Activated naive CD8-positive, alpha-beta T cell treated with anti-CD3 and anti-CD28 coated beads, Interleukin-2, amount 10 ng/mL, durations not matched to agents 7 days and 5 days (primary cell): ENCODE measurements at regions of chr19 and their contacts with region 1.

Region 1: DNA sequence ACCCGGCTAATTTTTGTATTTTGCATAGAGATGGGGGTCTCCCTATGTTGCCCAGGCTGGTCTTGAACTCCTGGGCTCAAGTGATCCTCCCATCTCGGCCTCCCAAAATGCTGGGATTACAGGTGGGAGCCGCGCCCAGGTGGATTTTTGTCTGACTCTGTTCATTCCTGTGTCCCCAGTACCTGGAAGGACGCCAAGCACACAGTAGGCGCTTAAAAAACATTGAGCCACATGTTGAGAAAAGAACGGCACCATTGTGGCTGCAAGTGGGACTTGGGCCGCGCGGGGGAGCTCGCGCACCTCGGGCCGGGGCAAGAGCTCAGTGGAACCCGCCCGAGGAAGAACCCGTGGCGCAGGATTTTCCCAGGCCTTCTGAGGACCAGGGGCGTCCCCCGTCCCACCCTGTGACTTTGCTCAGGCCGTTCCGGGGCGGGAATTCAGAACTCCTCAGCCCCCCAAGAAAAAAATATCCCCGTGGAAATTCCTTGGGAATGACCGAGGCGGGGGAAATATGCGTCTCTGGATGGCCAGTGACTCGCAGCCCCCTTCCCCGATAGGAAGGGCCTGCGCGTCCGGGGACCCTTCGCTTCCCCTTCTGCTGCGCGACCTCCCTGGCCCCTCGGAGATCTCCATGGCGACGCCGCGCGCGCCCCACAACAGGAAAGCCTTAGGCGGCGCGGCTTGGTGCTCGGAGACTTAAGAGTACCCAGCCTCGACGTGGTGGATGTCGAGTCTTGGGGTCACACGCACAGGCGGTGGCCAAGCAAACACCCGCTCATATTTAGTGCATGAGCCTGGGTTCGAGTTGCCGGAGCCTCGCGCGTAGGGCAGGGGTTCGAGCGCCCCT is 1.4 kb upstream of the ICAM1 start:
- DNase-seq: peak; percentile 96
- ATAC-seq: peak; percentile 69
- H3K4me3 Mint-ChIP-seq: peak overlapping the region; percentile 86
- H3K27ac Mint-ChIP-seq: peak overlapping the region; percentile 92
- H3K4me1 Mint-ChIP-seq: peaks cover 23% of the 10 kb centered on the region
- H3K27me3 Mint-ChIP-seq: no peaks in the 10 kb centered on the region

Region 2: DNA sequence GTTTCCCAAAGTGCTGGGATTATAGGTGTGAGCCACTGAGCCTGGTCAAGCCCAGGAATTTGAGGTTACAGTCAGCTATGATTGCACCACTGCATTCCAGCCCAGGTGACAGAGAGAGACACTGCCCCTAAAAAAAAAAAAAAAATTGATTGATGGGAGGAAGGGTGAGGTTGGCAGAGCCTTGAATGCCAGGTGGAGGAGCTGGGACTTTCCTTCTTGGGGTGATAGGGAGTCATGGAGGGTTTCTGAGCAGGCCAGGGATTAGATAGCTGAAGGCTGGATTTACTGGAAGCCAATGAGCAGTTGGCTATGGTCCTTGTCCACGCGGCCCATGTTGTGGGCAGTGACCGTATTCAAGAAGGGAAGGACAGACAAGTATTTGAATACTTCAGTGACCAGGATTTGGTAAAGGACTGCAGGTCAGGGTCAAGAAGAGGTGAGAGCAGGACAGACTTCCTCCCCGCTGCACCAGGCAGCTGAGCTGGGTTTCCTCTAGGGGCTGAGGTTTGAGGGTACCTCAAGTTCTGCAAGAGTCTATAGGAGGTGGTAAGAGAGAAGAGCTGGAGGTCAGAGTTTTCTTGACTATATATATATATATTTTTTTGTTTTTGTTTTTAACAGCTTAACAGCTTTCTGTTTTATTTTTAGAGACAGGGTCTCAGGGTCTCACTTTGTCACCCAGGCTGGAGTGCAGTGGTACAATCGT is 10.3 kb after region 1 on chr19:
- POLR2A ChIA-PET with region 1: interaction called, 26 read pairs
- DNase-seq: no peak
- ATAC-seq: peak; percentile 66
- H3K4me3 Mint-ChIP-seq: peak overlapping the region; percentile 7
- H3K27ac Mint-ChIP-seq: peak overlapping the region; percentile 36
- H3K4me1 Mint-ChIP-seq: peaks cover 11% of the 10 kb centered on the region
- H3K27me3 Mint-ChIP-seq: no peaks in the 10 kb centered on the region

Region 3: DNA sequence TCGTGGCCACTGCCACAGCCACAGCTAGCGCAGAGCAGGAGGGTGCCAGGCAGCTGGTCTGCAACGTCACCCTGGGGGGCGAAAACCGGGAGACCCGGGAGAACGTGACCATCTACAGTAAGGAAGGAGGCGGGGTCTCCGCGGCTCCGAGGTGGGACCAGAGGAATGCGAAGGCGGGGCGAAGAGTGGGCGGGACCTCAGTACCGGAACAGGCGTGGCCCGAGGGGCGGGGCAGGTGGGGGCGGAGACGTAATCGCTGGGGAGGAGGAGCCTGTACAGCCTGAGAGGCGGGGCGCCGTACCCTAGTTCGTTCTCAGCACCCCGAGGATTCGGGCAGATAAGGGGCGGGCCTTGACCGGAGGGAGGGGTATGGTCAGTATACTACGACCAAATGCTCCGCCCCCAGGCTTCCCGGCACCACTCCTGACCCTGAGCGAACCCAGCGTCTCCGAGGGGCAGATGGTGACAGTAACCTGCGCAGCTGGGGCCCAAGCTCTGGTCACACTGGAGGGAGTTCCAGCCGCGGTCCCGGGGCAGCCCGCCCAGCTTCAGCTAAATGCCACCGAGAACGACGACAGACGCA is 22.7 kb after region 1 on chr19:
- POLR2A ChIA-PET with region 1: interaction called, 60 read pairs
- DNase-seq: peak; percentile 83
- ATAC-seq: peak; percentile 13
- H3K4me3 Mint-ChIP-seq: peak overlapping the region; percentile 77
- H3K27ac Mint-ChIP-seq: peak overlapping the region; percentile 76
- H3K4me1 Mint-ChIP-seq: peaks cover 41% of the 10 kb centered on the region
- H3K27me3 Mint-ChIP-seq: peaks cover 82% of the 10 kb centered on the region

Region 4: DNA sequence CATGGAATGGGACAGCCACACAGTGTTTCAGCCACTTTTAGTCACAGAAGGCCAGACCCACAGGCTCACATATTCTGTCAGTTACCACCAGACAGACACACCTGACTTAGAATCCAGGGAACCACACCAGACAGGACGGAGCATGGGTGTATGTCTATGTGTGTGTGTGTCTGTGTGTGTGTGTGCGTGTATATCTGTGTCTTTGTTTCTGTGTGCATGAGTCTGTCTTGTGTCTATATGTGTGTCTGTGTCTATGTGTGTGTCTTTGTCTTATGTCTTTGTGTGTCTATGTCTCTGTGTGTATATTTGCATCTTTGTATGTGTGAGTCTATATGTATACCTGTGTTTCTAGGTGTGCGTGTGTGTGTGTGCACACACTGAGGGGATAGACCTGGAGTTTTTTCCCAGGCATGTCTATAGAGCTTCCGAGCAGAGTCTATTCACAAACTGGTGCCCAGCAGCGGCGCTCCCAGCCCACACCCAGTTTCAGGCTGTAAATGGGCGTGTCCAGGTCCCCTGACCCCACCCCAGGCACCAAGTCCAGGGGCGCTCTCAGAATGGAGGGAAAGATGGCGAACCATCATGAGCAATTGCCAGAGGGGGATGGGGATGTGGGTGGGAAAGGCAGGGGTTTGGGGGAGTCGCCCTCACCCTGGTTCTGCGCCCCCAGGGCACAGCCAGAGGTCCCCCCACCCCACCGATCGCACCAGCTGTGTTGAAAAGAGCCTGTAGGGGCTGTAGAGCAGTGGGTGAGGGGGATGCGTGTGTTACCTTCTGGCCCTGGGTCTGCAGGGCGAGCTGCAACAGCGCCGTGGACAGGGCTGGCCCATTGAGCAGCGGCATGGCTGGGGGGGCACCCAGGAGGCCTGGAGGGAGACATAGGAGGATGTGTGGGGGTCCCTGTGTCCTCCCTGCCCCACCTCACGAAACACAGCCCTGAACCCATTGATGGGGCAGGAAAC is 52.6 kb after region 1 on chr19:
- POLR2A ChIA-PET with region 1: no interaction called
- DNase-seq: no peak
- ATAC-seq: no peak
- H3K4me3 Mint-ChIP-seq: no peak overlapping the region
- H3K27ac Mint-ChIP-seq: no peak overlapping the region
- H3K4me1 Mint-ChIP-seq: peaks cover 1% of the 10 kb centered on the region
- H3K27me3 Mint-ChIP-seq: no peaks in the 10 kb centered on the region

Region 5: GRCh38 chr19:10380313-10381102 is 111.0 kb after region 1 on chr19 and contains the start of gene TYK2:
- POLR2A ChIA-PET with region 1: interaction called, 39 read pairs
- DNase-seq: peak; percentile 97
- ATAC-seq: peak; percentile 98
- H3K4me3 Mint-ChIP-seq: peak within 1 kb of the TSS; percentile 94
- H3K27ac Mint-ChIP-seq: peak within 1 kb of the TSS; percentile 92
- H3K4me1 Mint-ChIP-seq: peaks cover 17% of the 10 kb centered on the region
- H3K27me3 Mint-ChIP-seq: no peaks in the 10 kb centered on the region
- total RNA-seq, gene TYK2: 277 to 290 TPM

Region 6: DNA sequence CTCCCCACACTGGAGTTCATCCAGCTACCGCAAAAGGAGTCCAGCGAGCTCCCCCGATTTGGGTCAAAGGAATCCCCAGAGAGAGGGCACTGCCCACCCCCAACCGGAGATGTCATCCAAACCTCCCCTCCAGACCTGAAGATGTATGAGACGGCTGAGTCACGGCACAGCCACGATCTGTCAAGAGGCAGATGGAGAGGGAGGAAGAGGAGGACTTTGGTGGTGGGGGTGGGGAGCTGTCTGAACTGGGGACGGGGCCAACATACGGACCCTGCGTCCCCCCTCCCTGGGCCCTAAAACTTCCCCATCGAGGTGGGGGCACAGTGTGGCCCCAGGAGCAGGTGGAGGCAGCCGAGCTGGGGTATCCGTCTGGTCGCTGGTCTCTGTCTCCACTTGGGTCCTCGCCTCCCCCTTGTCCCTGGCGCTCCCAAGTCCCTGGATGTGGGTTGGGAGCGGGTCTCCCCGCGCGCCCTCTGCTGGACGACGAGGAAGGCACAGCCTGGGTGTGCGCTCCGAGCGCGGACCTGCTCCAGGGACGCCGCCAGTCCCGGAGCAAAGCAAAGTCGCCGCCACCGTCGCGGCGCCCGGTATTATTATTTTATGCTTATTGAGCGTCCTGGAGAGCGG is 154.6 kb after region 1 on chr19:
- POLR2A ChIA-PET with region 1: interaction called, 10 read pairs
- DNase-seq: peak; percentile 84
- ATAC-seq: no peak
- H3K4me3 Mint-ChIP-seq: peak overlapping the region; percentile 85
- H3K27ac Mint-ChIP-seq: peak overlapping the region; percentile 93
- H3K4me1 Mint-ChIP-seq: peaks cover 72% of the 10 kb centered on the region
- H3K27me3 Mint-ChIP-seq: peaks cover 3% of the 10 kb centered on the region